ENCODE measurements at regions of chr17 and their contacts with region 1.

Region 1: GRCh38 chr17:45051060-45051719 is at the start of gene DCAKD:
- DNase-seq: peak; percentile 97
- H3K4me3 ChIP-seq: peak within 1 kb of the TSS; percentile 79
- H3K27ac ChIP-seq: peak within 1 kb of the TSS; percentile 92
- H3K4me1 ChIP-seq: peaks cover 19% of the 10 kb centered on the region
- CTCF ChIP-seq: no peak
- total RNA-seq, gene DCAKD: 40.8 and 53.1 TPM in 2 replicates

Region 2: GRCh38 chr17:45038728-45039634 is 12.2 kb before region 1 on chr17:
- CTCF ChIA-PET with region 1: no interaction called
- POLR2A ChIA-PET with region 1: interaction called, 13 read pairs
- intact Hi-C with region 1: no loop called
- DNase-seq: no peak
- H3K4me3 ChIP-seq: no peak overlapping the region
- H3K27ac ChIP-seq: no peak overlapping the region
- H3K4me1 ChIP-seq: peaks cover 8% of the 10 kb centered on the region
- CTCF ChIP-seq: no peak

Region 3: DNA sequence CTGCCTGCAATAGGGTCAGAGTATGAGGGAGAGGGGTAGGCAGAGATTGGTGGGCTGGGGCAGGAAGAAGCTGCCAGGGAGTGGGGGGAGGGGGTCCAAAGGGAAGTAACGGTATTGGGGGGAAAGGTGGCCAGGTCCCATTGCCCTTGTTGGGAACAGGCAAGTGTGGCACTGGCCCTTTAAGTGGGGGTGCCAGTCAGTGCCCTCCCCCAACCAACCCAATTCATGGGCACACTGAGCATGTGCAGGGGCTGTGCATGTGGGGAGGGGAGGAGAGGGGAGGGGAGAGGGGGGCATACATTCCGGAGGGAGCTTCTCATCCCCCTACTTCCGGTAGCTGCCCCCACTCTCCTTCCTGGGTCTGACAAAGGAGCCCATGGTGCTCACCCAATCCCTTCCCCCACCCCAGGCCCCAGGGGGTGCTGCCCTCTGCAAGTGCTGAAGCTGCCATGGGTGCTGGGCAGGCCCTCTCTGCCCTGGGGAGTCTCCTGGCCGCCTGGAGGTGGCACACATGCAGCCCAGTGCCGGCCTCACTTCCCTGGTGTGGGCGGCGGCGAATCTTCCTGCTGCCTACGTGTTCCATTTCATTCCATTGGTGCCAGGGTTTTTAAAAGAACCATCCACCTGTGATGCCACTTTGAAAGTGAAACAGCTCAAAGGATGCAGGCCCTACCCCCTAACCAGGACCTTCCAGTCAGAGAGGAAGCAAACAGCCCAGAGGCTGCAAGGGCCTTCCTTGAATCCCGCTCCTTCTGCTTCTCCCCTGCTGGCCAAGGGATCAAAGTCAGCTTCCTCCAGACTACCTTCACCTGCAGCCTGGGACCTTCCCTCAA is 121.5 kb after region 1 on chr17:
- CTCF ChIA-PET with region 1: no interaction called
- POLR2A ChIA-PET with region 1: no interaction called
- intact Hi-C with region 1: no loop called
- DNase-seq: peak; percentile 81
- H3K4me3 ChIP-seq: peak overlapping the region; percentile 65
- H3K27ac ChIP-seq: peak overlapping the region; percentile 61
- H3K4me1 ChIP-seq: peaks cover 24% of the 10 kb centered on the region
- CTCF ChIP-seq: no peak

Measured in OCI-LY7 (cell line).